Esophagus muscularis mucosa (tissue), 4 donors: ENCODE measurements at regions of chr12 and their contacts with region 1.

Region 1: GRCh38 chr12:23204933-23205778 is 580.2 kb downstream of the ETNK1 start:
- DNase-seq: no peak
- H3K4me3 ChIP-seq: no peak overlapping the region
- H3K27ac ChIP-seq: no peak overlapping the region
- H3K4me1 ChIP-seq: no peaks in the 10 kb centered on the region
- H3K27me3 ChIP-seq: no peaks in the 10 kb centered on the region
- CTCF ChIP-seq: peak; percentile 82 to 95 (median 91)
- EP300 ChIP-seq: no peak
- POLR2A ChIP-seq: no peak

Region 2: GRCh38 chr12:23259558-23259957 is 54.4 kb after region 1 on chr12:
- intact Hi-C with region 1: no loop called
- DNase-seq: no peak
- H3K4me3 ChIP-seq: no peak overlapping the region
- H3K27ac ChIP-seq: no peak overlapping the region
- H3K4me1 ChIP-seq: no peaks in the 10 kb centered on the region
- H3K27me3 ChIP-seq: no peaks in the 10 kb centered on the region
- CTCF ChIP-seq: no peak
- EP300 ChIP-seq: no peak
- POLR2A ChIP-seq: no peak

Region 3: DNA sequence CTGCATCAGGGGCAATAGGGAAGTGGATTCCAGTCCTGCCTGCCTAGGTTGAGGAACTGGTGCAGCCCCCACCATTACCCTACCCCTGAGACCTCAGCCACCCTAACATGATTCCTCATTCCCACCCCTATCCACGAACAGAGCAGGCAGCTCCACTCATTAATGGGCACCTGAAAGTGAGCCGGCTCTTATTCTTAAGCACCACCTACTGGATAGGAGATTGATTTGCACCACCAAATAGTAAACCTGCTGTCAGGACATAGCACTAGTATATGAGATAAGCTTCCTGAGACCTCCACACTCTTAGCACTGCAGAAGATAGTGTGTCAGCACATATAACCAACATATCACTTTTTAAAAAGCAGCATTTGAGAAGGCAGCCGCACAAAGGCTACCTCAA is 171.1 kb after region 1 on chr12:
- intact Hi-C with region 1: no loop called
- DNase-seq: no peak
- H3K4me3 ChIP-seq: no peak overlapping the region
- H3K27ac ChIP-seq: no peak overlapping the region
- H3K4me1 ChIP-seq: no peaks in the 10 kb centered on the region
- H3K27me3 ChIP-seq: no peaks in the 10 kb centered on the region
- CTCF ChIP-seq: no peak
- EP300 ChIP-seq: no peak
- POLR2A ChIP-seq: no peak

Region 4: DNA sequence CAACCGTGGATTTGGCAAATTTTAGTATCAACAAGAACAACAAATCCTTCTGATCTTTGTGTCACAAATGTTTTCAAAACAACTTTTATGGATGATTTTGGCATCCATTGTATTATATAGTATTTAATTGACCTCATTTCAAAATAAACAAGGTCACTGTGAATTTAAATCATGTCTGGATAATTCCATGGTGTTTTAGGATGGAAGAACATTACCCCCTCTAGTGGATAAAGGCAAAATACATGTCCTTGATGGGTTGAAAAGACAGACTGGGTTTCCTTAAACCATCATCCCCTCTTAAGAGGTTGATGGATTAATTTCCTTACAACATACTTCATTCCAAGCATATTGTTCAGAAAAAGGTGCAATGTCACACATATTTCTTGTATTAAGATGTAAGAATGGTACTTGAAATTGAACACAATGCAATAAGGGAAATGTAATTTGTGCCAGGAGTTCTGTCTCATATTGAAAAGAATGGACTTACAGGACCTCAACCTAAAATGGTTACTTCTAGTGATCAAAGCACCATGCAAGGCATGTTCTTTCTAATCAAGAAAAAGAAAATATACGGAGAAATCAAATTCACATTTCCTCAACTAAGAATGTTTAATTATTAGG is 1391.7 kb after region 1 on chr12:
- intact Hi-C with region 1: loop called (anchors 10 kb)
- DNase-seq: no peak
- H3K4me3 ChIP-seq: no peak overlapping the region
- H3K27ac ChIP-seq: no peak overlapping the region
- H3K4me1 ChIP-seq: no peaks in the 10 kb centered on the region
- H3K27me3 ChIP-seq: no peaks in the 10 kb centered on the region
- CTCF ChIP-seq: peak; percentile 45 to 70 (median 62)
- EP300 ChIP-seq: no peak
- POLR2A ChIP-seq: no peak

Region 5: GRCh38 chr12:25130741-25131188 is 1925.6 kb after region 1 on chr12:
- intact Hi-C with region 1: loop called (anchors 10 kb)
- DNase-seq: no peak
- H3K4me3 ChIP-seq: no peak overlapping the region
- H3K27ac ChIP-seq: no peak overlapping the region
- H3K4me1 ChIP-seq: no peaks in the 10 kb centered on the region
- H3K27me3 ChIP-seq: no peaks in the 10 kb centered on the region
- CTCF ChIP-seq: peak; percentile 54 to 66 (median 58)
- EP300 ChIP-seq: no peak
- POLR2A ChIP-seq: no peak